ENCODE measurements at regions of chr14 and their contacts with region 1.

Region 1: GRCh38 chr14:71753126-71753830 is 179.0 kb upstream of the RGS6 start:
- DNase-seq: peak; percentile 91
- ATAC-seq: peak; percentile 86
- H3K4me3 Mint-ChIP-seq: 0 out of 2 replicates have a peak overlapping the region, but pooled peaks have one; percentile 6
- H3K27ac Mint-ChIP-seq: no peak overlapping the region
- H3K4me1 Mint-ChIP-seq: peaks cover 26% of the 10 kb centered on the region
- H3K27me3 Mint-ChIP-seq: peaks cover 3% of the 10 kb centered on the region; the same call in 1 of the 2 replicates
- CTCF ChIP-seq: peak; percentile 73

Region 2: DNA sequence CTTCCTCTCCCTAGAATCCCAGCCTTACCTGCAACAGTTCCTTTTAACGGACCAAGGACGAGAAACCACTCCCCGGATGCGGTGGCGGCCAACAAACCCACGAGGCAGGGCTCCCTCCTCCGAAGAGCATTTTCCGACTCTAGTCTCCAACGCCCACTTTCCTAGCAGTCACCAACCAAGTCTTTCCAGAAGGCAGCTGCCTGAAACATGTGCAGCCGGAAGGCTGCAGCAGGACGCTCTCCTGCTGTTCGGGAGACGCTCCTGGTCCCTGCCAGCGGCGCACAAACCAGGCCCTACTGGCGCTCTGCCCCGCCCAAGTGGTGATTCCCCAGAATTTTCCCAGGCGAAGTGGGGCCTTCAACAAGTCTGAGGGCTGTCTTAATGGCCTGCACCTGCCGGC is 1197.4 kb before region 1 on chr14:
- CTCF ChIA-PET with region 1: no interaction called
- POLR2A ChIA-PET with region 1: no interaction called
- DNase-seq: peak; percentile 50
- ATAC-seq: peak; percentile 90
- H3K4me3 Mint-ChIP-seq: peak overlapping the region; percentile 55
- H3K27ac Mint-ChIP-seq: no peak overlapping the region
- H3K4me1 Mint-ChIP-seq: peaks cover 7% of the 10 kb centered on the region
- H3K27me3 Mint-ChIP-seq: no peaks in the 10 kb centered on the region; the same call in none of the 2 replicates
- CTCF ChIP-seq: no peak

Region 3: DNA sequence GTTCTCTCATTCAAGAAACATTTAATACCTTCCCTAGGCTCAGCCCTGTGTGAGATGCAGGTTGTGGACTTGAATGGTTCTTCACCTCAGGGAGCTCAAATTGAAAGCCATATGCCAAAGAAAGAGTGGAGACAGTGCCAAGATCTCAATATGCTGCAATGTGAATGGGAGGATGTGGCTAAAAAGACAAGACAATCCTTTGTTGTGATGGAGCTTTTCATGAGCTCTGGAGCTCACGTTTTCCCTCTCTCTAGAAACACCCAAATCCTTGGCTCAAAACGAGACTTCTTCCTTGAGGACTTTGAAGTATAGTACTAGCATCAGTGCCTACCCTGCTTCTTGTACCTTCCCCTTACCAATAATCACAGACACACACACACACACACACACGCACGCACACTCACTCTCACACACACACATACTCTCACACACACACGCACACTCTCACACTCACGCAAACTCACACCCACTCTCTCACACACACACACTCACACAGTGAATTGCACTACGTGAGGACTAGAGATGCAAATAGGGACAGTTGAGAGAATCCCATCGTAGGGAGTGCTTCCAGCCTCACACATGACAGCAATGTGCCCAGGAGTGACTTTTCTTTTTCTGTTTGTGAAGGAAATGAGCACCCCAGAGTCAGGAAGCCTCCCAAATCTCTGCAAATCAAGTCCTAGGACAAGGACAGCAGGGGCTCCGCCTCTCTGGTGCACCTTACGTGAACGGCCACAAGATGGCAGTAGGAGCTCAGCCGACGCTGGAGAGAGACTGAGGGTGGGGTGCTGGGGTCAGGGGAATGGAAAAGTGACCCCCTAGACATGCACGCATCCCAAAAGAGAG is 614.6 kb before region 1 on chr14:
- CTCF ChIA-PET with region 1: interaction called, 20 read pairs
- POLR2A ChIA-PET with region 1: no interaction called
- DNase-seq: peak; percentile 78
- ATAC-seq: peak; percentile 91
- H3K4me3 Mint-ChIP-seq: no peak overlapping the region
- H3K27ac Mint-ChIP-seq: no peak overlapping the region; the same call in 1 of the 2 replicates
- H3K4me1 Mint-ChIP-seq: peaks cover 15% of the 10 kb centered on the region
- H3K27me3 Mint-ChIP-seq: no peaks in the 10 kb centered on the region; the same call in 1 of the 2 replicates
- CTCF ChIP-seq: peak; percentile 88

Region 4: DNA sequence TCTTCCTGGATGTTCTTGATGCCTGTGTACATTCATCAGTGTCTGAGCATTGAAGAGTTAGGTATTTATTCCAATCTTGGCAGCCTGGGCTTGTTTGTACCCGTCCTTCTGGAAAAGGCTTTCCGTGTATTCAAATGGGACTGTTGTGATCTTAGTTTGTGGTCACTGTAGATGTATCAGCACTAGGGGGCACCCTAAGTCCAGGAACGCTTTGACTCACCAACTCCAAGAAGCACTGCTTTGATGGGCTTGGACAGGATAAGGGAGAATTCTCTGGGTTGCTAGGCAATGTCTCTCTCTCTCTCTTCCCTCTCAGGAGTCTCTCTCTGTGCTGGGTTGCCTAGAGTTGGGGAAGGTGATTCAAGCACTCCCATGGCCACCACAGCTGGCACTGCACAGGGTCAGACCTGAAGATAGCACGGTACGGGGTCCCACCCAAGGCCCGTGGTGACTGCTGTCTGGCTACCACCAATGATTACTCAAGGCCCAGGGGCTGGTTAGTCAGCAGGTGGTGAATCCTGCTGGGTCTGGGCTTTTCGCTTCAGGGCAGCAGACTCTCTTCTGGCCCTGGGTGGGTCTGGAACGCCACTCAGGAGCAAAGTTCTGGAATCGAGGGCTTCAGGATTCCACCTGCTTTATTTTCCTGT is 32.2 kb before region 1 on chr14:
- CTCF ChIA-PET with region 1: interaction called, 33 read pairs
- POLR2A ChIA-PET with region 1: no interaction called
- DNase-seq: peak; percentile 61
- ATAC-seq: peak; percentile 96
- H3K4me3 Mint-ChIP-seq: no peak overlapping the region
- H3K27ac Mint-ChIP-seq: peak overlapping the region; percentile 71
- H3K4me1 Mint-ChIP-seq: no peaks in the 10 kb centered on the region; the same call in 1 of the 2 replicates
- H3K27me3 Mint-ChIP-seq: no peaks in the 10 kb centered on the region
- CTCF ChIP-seq: peak; percentile 54

Region 5: DNA sequence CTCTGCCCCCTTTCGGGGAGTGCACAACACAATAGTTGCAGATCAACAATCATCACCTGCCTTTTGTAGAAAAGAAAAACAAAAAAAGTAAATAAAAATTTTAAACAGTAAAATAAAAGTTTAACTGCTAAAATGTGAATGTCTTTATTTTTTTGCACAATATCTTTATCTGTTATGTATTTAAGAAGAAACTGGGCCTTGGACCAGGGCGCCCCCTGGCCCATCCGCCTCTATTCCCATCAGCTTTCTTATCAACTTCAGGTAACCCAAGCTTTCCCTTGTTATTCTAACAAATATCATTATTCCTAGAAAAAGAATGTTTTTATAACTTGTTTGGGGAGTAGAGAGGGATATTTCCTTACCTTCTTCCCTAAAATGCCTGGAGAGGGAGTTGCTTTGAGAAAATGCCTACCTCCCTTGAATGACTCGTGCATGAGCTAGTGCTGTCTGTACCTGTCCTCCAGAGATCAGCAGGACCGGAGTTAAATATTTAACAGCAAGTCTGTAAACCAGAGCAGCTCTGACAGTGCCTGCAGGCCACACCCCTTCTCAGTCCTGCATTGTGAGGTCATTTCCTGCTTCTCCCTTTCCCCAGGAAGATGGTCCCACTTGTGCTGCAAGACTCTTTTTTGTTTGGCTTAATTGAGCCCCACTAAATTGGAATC is 13.9 kb before region 1 on chr14:
- CTCF ChIA-PET with region 1: interaction called, 11 read pairs
- POLR2A ChIA-PET with region 1: no interaction called
- DNase-seq: no peak
- ATAC-seq: peak; percentile 74
- H3K4me3 Mint-ChIP-seq: no peak overlapping the region
- H3K27ac Mint-ChIP-seq: no peak overlapping the region
- H3K4me1 Mint-ChIP-seq: peaks cover 13% of the 10 kb centered on the region
- H3K27me3 Mint-ChIP-seq: no peaks in the 10 kb centered on the region
- CTCF ChIP-seq: no peak